H1 (cell line): ENCODE measurements at regions of chr17 and their contacts with region 1.

Region 1: GRCh38 chr17:81821603-81822311 is 11.3 kb downstream of the MCRIP1 start:
- DNase-seq: peak in 1 of 2 experiments; percentile 80
- H3K4me3 ChIP-seq: no peak overlapping the region
- H3K27ac ChIP-seq: no peak overlapping the region
- H3K4me1 ChIP-seq: peaks cover 0 to 16% (median 9%) of the 10 kb centered on the region in 4 experiments; a peak in 6 of 7 replicates
- H3K27me3 ChIP-seq: no peaks in the 10 kb centered on the region
- CTCF ChIP-seq: peak; percentile 45 to 50 (median 48)
- EP300 ChIP-seq: no peak
- POLR2A ChIP-seq: no peak
- RAD21 ChIP-seq: peak in 1 of 2 experiments; percentile 42; a peak in 2 of 4 replicates

Region 2: DNA sequence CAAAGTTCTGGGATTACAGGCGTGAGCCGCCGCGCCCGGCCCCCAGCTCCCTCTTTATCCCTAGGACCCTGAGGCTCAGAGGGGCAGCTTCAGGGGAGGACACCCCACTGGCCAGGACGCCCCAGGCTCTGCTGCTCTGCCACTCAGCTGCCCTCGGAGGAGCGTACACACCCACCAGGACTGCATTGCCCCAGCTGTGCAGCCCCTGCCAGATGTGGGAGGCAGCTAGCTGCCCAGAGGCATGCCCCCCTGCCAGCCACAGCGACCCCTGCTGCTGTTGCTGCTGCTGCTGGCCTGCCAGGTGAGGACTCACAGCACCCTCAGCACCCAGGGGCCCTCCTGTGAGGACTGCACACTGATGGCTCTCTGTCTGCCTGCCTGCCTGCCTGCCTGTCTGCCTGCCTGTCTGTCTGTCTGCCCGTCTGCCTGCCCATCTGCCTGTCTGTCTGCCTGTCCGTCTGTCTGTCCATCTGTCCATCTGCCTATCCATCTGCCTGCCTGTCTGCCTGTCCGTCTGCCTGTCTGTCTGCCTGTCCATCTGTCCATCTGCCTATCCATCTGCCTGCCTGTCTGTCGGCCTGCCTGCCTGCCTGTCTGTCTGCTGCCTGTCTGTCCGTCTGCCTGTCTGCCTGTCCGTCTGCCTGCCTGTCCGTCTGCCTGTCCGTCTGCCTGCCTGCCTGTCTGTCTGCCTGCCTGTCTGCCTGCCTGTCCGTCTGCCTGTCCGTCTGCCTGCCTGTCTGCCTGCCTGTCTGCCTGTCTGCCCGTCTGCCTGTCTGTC is 12.8 kb before region 1 on chr17:
- CTCF ChIA-PET with region 1: interaction called, 19 read pairs
- POLR2A ChIA-PET with region 1: interaction called, 6 read pairs
- DNase-seq: no peak
- H3K4me3 ChIP-seq: no peak overlapping the region
- H3K27ac ChIP-seq: no peak overlapping the region
- H3K4me1 ChIP-seq: no peaks in the 10 kb centered on the region; a peak in 3 of 7 replicates
- H3K27me3 ChIP-seq: peaks cover 17 to 31% (median 25%) of the 10 kb centered on the region in 4 experiments
- CTCF ChIP-seq: no peak
- EP300 ChIP-seq: no peak
- POLR2A ChIP-seq: no peak
- RAD21 ChIP-seq: no peak

Region 3: DNA sequence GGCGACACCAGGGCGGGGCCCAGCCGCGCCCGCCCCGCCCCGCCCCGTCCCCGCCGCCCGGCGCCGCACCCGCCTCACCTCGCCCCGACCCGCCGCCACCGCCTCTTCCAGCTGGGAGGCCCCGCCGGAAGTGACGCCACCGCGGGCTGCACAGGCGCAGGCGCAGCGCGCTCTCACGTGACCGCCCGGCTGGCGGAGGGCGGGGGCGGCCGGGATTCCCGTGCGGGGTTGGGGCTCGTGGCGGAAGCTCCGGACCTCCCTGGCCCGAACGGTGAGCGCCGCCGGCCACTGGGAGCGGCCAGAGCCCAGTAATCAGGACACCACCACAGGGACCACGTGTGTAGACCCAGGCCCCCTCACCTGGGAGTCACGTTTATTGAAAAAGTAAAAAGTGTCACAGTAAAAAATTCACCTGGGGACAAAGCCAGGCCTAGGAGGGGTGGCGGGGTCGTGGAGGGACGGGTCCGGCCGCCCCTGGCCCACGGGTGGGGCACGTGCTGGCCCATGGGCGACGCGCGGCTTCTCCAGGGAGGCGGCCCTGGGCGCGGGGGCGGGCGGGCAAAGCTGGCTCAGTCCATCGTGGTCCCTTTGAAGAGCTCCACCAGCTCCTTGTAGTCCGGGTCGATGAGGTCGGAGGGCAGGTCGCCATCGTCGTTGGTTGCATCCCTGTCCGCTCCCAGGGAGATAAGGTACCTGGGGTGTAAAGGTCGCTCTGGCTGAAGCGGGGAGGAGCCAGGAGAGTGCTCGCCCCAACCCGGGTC is 11.6 kb after region 1 on chr17 and contains the start of gene MCRIP1:
- CTCF ChIA-PET with region 1: interaction called, 10 read pairs
- POLR2A ChIA-PET with region 1: interaction called, 13 read pairs
- DNase-seq: peak; percentile 60 to 95
- H3K4me3 ChIP-seq: peak within 1 kb of the TSS; percentile 81 to 97 (median 85)
- H3K27ac ChIP-seq: peak within 1 kb of the TSS; percentile 83
- H3K4me1 ChIP-seq: peaks cover 0 to 15% (median 8%) of the 10 kb centered on the region in 4 experiments; a peak in 4 of 7 replicates
- H3K27me3 ChIP-seq: 0 out of 7 replicates have a peak, but pooled peaks cover 0 to 2% (median 0%) of the 10 kb centered on the region in 4 experiments
- CTCF ChIP-seq: 0 out of 4 replicates have a peak, but pooled peaks of 1 of the 3 experiments have one; percentile 1
- EP300 ChIP-seq: 0 out of 3 replicates have a peak, but pooled peaks of 1 of the 2 experiments have one; percentile 27
- POLR2A ChIP-seq: peak in 1 of 2 experiments; percentile 87; a peak in 1 of 3 replicates
- RAD21 ChIP-seq: no peak
- total RNA-seq, gene MCRIP1: 103 and 115 TPM in 2 replicates